WTC11 (cell line): ENCODE measurements at regions of chr3 and their contacts with region 1.

Region 1: GRCh38 chr3:90091204-90091924 is 983.9 kb downstream of the EPHA3 start:
- DNase-seq: peak; percentile 25
- ATAC-seq: peak; percentile 89
- H3K4me3 Mint-ChIP-seq: no peak overlapping the region
- H3K27ac Mint-ChIP-seq: no peak overlapping the region
- H3K4me1 Mint-ChIP-seq: peaks cover 18% of the 10 kb centered on the region
- H3K27me3 Mint-ChIP-seq: no peaks in the 10 kb centered on the region
- CTCF ChIP-seq: peak; percentile 52; the same call in 1 of the 2 replicates

Region 2: GRCh38 chr3:89947337-89947954 is 143.9 kb before region 1 on chr3:
- CTCF ChIA-PET with region 1: interaction called, 15 read pairs
- POLR2A ChIA-PET with region 1: no interaction called
- DNase-seq: no peak
- ATAC-seq: peak; percentile 74
- H3K4me3 Mint-ChIP-seq: no peak overlapping the region
- H3K27ac Mint-ChIP-seq: no peak overlapping the region
- H3K4me1 Mint-ChIP-seq: peaks cover 35% of the 10 kb centered on the region
- H3K27me3 Mint-ChIP-seq: peaks cover 18% of the 10 kb centered on the region
- CTCF ChIP-seq: no peak